ENCODE measurements at regions of chr4 and their contacts with region 1.

Region 1: GRCh38 chr4:121484633-121485032 is 103.8 kb upstream of the QRFPR start:
- DNase-seq: peak in 2 of 5 donors; percentile 24 to 36
- ATAC-seq: peak in 3 of 4 donors; percentile 82 to 87 (median 84)
- H3K4me3 ChIP-seq: no peak overlapping the region
- H3K27ac ChIP-seq: no peak overlapping the region
- H3K4me1 ChIP-seq: no peaks in the 10 kb centered on the region
- H3K27me3 ChIP-seq: no peaks in the 10 kb centered on the region
- CTCF ChIP-seq: peak; percentile 52 to 74 (median 67)
- POLR2A ChIP-seq: no peak

Region 2: DNA sequence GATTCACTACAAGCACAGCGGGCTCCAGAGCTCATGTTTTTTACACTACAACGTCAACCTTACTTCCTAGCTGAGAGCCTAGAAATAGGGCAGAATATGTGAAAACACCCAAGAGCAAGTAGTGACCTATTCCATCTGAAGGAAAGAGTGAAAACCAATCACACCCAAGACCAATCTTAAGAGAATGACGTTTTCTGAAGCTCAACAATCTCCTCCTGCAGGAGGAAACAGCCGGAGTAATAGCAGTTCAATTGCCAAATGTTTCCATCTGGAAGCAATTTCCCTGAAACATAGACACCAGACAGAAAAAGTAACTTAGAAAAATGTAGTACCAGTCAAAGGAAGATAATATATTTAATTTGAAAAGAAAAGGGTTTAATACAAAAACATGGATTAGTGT is 69.7 kb after region 1 on chr4:
- intact Hi-C with region 1: loop called in 1 of 10 experiments (anchors 10 kb)
- DNase-seq: no peak
- ATAC-seq: peak; percentile 63 to 86 (median 82)
- H3K4me3 ChIP-seq: no peak overlapping the region
- H3K27ac ChIP-seq: peak overlapping the region in 9 of 12 donors; percentile 23 to 77 (median 63)
- H3K4me1 ChIP-seq: peaks cover 0 to 34% (median 6%) of the 10 kb centered on the region in 12 donors
- H3K27me3 ChIP-seq: no peaks in the 10 kb centered on the region
- CTCF ChIP-seq: no peak
- POLR2A ChIP-seq: no peak

Region 3: GRCh38 chr4:121642292-121642691 is 157.7 kb after region 1 on chr4:
- intact Hi-C with region 1: loop called in 1 of 10 experiments (anchors 5 kb)
- DNase-seq: no peak
- ATAC-seq: no peak
- H3K4me3 ChIP-seq: no peak overlapping the region
- H3K27ac ChIP-seq: no peak overlapping the region
- H3K4me1 ChIP-seq: no peaks in the 10 kb centered on the region
- H3K27me3 ChIP-seq: no peaks in the 10 kb centered on the region
- CTCF ChIP-seq: no peak
- POLR2A ChIP-seq: no peak

Region 4: GRCh38 chr4:121656269-121656641 is 171.6 kb after region 1 on chr4:
- intact Hi-C with region 1: loop called in 9 of 10 experiments (anchors 2 to 10 kb)
- DNase-seq: peak in 4 of 5 donors; percentile 33 to 50 (median 40)
- ATAC-seq: peak; percentile 76 to 91 (median 80)
- H3K4me3 ChIP-seq: no peak overlapping the region
- H3K27ac ChIP-seq: peak overlapping the region in 1 of 12 donors; percentile 43
- H3K4me1 ChIP-seq: peaks cover 0 to 11% (median 0%) of the 10 kb centered on the region in 12 donors
- H3K27me3 ChIP-seq: no peaks in the 10 kb centered on the region
- CTCF ChIP-seq: peak in 10 of 12 donors; percentile 10 to 54 (median 38)
- POLR2A ChIP-seq: no peak

Region 5: DNA sequence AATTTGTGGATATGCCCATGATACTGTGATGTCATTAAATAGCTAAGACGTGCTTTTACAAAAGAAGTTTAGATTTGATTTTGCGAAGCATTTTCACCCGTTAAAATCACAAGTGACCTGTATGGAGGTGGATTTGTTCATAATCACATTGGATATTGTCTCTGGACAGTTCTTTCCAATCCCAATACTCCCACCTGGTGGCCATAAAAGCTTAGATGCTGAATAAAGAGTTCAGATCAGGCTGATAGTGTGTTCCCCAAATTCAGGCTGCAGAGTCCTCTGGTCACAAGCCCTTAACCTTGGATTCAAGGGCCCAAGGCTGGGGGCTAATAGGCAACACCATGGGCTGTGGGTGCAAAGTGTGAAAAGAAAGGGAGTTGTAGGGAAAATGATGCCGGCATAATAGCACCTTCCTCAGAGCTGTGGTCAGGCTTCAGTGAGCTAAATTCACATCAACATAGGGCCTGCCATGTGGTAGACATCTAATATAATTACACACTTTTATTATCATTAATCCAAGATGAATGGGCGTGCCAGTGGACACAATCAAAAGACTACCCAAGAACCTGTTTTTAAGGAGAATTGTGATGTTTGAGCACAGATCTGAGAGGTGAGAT is 252.2 kb after region 1 on chr4:
- intact Hi-C with region 1: loop called in 3 of 10 experiments (anchors 5 to 10 kb)
- DNase-seq: peak in 1 of 5 donors; percentile 18
- ATAC-seq: peak in 1 of 4 donors; percentile 28
- H3K4me3 ChIP-seq: no peak overlapping the region
- H3K27ac ChIP-seq: no peak overlapping the region
- H3K4me1 ChIP-seq: peaks cover 0 to 22% (median 0%) of the 10 kb centered on the region in 12 donors
- H3K27me3 ChIP-seq: peaks cover 0 to 3% (median 0%) of the 10 kb centered on the region in 9 donors
- CTCF ChIP-seq: peak in 11 of 12 donors; percentile 14 to 61 (median 44)
- POLR2A ChIP-seq: no peak

Measured in heart left ventricle (tissue), 16 donors.